Cardiac septum (tissue), 1 donor: ENCODE measurements at regions of chr15 and their contacts with region 1.

Region 1: DNA sequence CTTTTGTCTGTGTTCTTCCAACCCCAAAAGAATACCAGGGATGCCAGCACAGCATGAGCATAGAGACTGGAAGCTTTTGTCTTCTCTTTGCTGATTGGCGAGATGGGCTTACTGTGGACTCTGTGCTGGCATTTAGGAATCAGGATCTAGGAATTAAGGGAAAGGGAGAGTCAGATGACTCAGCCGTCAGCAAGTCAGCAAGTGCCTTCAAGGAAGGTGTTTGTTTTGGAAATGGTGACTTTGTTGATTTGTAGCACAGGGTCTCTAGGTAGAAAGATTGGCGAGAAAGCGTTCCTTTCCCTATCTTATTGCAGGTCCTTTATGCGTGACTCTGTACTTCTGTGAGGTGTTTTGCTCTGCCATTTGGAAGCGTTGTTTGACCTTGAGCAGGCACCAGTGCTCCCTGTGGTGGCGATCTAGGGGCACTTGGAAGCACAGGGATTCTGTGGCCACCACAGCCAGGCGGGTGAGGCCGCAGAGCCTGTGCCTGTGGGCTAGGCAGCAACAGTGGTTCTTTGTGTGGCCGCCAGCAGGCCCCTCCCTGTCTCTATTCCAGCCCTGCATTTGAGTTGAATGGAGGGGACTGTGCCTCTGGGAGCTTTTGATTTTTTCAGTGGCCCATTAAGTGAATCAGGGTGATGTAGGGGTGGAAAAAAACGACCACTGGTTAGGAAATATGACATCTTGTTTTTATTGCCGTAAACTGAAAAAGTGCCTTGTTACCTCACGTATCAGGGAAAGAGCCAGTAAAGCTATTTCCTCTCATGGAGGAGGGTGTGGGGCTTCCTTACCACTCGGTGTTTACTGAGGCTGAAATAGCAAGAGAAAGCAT is 19.0 kb downstream of the FAN1 start:
- DNase-seq: no peak

Region 2: GRCh38 chr15:30956216-30956803 is 33.6 kb after region 1 on chr15:
- intact Hi-C with region 1: loop called (anchors 5 kb)
- DNase-seq: no peak